Heart right ventricle (tissue), 16 donors: ENCODE measurements at regions of chr2 and their contacts with region 1.

Region 1: DNA sequence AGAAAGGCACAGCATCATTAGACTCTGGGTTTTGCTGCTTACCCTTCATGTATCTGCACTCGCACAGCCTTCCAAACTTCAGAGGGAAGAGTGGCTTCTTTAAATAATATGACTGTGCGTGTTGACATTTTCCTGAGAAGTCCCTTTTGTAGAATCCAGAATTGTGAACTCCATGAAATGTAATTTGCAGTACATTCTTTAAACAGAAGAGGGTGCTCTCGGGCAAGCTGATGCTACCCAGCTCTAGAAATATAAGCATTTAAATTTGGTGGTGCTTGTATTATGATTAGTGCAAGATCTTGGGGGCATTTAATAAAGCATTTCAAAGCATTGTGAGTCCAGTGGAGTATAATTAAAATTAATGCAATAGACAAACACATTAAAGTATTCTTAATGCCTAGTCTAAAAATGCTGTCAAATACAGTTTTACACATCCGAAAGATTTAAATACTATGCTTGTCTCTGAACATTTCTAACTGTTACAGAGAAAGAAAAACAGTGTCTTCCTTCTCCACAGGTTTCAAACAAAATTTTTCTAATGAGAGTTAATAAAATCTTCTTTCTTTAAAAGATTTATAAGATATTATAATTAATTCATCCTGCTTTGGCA is 17.3 kb upstream of the GTF2A1L start:
- DNase-seq: no peak
- ATAC-seq: peak in 3 of 8 donors; percentile 42 to 61 (median 55)
- H3K4me3 ChIP-seq: no peak overlapping the region
- H3K27ac ChIP-seq: no peak overlapping the region
- H3K4me1 ChIP-seq: no peaks in the 10 kb centered on the region
- H3K27me3 ChIP-seq: no peaks in the 10 kb centered on the region
- CTCF ChIP-seq: peak; percentile 29 to 79 (median 73)

Region 2: DNA sequence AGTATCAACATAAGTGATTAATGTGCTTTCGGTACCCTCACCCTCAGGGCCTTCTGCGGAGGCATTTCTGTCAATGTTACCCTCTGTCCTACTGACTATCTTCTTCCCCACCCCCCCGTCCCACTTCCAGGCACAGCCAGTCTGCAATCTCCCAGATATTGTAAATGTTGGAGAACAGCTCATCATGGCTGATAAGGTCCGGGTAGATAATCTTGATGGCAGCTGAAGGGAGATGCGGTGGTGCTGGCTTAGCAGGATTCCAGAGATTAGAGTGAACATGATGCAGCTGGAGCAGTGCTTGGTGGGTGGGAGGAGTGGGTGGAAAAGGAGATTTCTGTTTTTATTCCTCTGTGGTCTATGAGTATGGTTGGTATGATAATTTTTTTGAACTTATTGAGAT is 32.8 kb after region 1 on chr2:
- intact Hi-C with region 1: no loop called
- DNase-seq: no peak
- ATAC-seq: no peak
- H3K4me3 ChIP-seq: no peak overlapping the region
- H3K27ac ChIP-seq: no peak overlapping the region
- H3K4me1 ChIP-seq: no peaks in the 10 kb centered on the region
- H3K27me3 ChIP-seq: peaks cover 0 to 5% (median 0%) of the 10 kb centered on the region in 7 donors
- CTCF ChIP-seq: no peak

Region 3: GRCh38 chr2:48727565-48727964 is 127.3 kb after region 1 on chr2:
- intact Hi-C with region 1: loop called in 2 of 10 experiments (anchors 5 kb)
- DNase-seq: no peak
- ATAC-seq: peak in 1 of 8 donors; percentile 44
- H3K4me3 ChIP-seq: no peak overlapping the region
- H3K27ac ChIP-seq: peak overlapping the region in 1 of 10 donors; percentile 31
- H3K4me1 ChIP-seq: peaks cover 0 to 23% (median 3%) of the 10 kb centered on the region in 9 donors
- H3K27me3 ChIP-seq: no peaks in the 10 kb centered on the region
- CTCF ChIP-seq: peak in 3 of 9 donors; percentile 13 to 38 (median 31)

Region 4: DNA sequence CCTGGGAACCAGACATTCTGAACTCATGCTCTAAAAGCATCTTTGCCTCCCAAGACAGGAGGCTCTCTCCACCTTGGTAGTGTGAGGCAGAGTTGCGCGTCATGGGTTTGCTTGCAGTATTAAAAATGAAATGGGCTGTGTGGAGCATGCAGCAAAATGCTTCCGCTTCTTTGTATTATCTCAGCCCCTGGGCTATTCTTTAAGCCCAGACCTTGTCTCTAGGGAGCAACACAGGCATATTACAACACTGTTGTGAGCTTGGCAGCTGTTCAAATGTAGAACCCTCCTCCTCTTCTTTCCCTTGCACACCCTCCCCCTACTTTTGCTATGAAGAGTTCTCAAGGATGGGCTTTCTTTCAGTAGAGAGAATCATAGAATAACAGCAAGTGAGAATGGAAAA is 340.3 kb after region 1 on chr2:
- intact Hi-C with region 1: loop called in 1 of 10 experiments (anchors 5 kb)
- DNase-seq: no peak
- ATAC-seq: peak in 1 of 8 donors; percentile 53
- H3K4me3 ChIP-seq: no peak overlapping the region
- H3K27ac ChIP-seq: no peak overlapping the region
- H3K4me1 ChIP-seq: peaks cover 0 to 23% (median 8%) of the 10 kb centered on the region in 9 donors
- H3K27me3 ChIP-seq: peaks cover 0 to 3% (median 0%) of the 10 kb centered on the region in 7 donors
- CTCF ChIP-seq: no peak

Region 5: GRCh38 chr2:50492477-50492851 is 1892.2 kb after region 1 on chr2:
- intact Hi-C with region 1: loop called in 1 of 10 experiments (anchors 10 kb)
- DNase-seq: peak in 1 of 2 donors; percentile 22
- ATAC-seq: peak; percentile 69 to 90 (median 78)
- H3K4me3 ChIP-seq: peak overlapping the region in 4 of 10 donors; percentile 7 to 25 (median 24)
- H3K27ac ChIP-seq: no peak overlapping the region
- H3K4me1 ChIP-seq: peaks cover 0 to 12% (median 7%) of the 10 kb centered on the region in 9 donors
- H3K27me3 ChIP-seq: peaks cover 0 to 23% (median 2%) of the 10 kb centered on the region in 7 donors
- CTCF ChIP-seq: peak; percentile 50 to 81 (median 70)